AG04449 (cell line): ENCODE measurements at regions of chr15 and their contacts with region 1.

Region 1: GRCh38 chr15:42065033-42065432 is 29.3 kb downstream of the PLA2G4D start:
- DNase-seq: no peak
- H3K4me3 ChIP-seq: no peak overlapping the region
- CTCF ChIP-seq: no peak

Region 2: DNA sequence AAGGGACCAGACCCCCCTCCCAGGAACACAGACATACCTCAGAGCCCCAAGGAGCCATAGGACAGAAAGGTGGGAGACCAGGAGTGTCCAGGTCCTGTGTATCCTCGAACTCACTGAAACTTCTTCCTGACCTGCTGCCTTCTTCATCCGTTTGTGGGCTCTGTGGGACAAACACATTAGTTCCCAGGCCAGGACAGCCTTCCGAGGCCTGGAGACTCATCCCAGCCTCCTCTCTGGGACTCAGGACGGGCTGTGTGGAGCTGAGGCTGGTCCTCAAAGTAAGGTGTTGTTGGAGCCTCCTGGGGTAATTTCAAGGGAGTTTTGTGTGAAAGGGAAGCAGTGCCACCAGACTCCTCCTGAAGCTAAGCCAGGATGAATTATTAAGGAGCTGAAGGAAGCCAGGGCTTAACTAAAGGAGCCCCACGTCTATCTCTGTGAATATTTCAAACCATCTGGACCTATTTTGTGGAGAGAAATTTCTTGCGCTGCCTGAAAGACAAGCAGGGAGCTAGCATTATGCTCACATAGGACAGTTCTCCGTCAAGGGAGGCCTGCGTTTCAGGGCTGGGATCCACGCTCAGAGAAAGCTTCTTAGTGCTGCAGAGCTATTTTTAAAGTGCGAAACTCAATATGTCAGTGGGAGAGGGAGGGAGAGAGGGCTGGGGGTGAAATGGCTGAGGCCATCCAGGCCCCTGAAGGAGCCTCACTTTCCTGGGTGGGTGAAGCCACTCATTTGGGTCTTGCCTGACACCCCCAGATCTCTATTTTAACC is 14.4 kb before region 1 on chr15:
- CTCF ChIA-PET with region 1: interaction called, 39 read pairs
- POLR2A ChIA-PET with region 1: no interaction called
- DNase-seq: no peak
- H3K4me3 ChIP-seq: no peak overlapping the region
- CTCF ChIP-seq: no peak

Region 3: GRCh38 chr15:42182961-42183360 is 117.9 kb after region 1 on chr15:
- CTCF ChIA-PET with region 1: no interaction called
- POLR2A ChIA-PET with region 1: no interaction called
- DNase-seq: no peak
- H3K4me3 ChIP-seq: no peak overlapping the region
- CTCF ChIP-seq: no peak